Heart left ventricle (tissue), 16 donors: ENCODE measurements at regions of chr7 and their contacts with region 1.

Region 1: DNA sequence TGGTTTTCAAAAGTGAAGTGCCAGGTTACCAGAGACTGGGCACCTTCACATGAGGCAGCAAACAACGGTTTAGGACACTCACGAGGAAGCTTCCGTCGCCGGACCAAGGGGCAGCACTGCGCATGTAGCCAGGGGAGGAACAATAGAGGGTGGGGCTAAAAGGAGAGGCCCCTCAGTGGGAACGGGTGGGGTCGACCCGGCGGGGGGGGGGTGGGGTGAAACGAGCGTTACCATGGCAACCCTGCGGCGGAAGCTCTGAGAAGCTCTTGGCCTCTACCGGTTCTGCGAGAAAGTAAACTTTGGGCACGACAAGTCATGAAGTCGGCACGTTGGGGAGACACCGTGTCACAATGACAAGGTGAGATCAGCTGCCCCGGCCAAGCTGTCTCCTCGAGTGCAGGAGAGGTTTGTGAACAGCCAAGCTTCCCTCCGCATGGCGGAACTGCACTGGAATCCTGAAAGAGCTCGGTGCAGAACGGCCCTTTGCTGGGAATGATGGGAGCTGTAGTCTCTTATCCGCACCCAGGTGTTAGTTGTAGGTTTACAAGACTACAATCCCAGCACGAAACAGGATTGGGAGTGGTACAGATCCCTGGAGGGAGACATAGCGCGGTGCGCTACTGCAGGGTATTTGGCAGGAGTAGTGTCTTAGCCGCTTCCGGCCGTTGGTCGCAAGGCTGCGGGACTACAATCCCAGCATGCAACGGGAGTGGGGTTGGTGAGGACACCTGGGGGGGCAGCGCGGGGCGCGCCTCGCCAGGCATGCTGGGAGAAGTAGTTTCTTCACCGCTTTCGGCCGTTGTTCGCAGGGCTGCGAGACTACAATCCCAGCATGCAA is 72.8 kb upstream of the ZNF722 start:
- DNase-seq: peak; percentile 85 to 97 (median 94)
- ATAC-seq: peak; percentile 98 to 99 (median 99)
- H3K4me3 ChIP-seq: peak overlapping the region; percentile 41 to 86 (median 70)
- H3K27ac ChIP-seq: peak overlapping the region in 11 of 12 donors; percentile 78 to 97 (median 88)
- H3K4me1 ChIP-seq: peaks cover 0 to 14% (median 4%) of the 10 kb centered on the region in 12 donors
- H3K27me3 ChIP-seq: peaks cover 0 to under 1% (median 0%) of the 10 kb centered on the region in 9 donors
- CTCF ChIP-seq: no peak
- POLR2A ChIP-seq: no peak

Region 2: DNA sequence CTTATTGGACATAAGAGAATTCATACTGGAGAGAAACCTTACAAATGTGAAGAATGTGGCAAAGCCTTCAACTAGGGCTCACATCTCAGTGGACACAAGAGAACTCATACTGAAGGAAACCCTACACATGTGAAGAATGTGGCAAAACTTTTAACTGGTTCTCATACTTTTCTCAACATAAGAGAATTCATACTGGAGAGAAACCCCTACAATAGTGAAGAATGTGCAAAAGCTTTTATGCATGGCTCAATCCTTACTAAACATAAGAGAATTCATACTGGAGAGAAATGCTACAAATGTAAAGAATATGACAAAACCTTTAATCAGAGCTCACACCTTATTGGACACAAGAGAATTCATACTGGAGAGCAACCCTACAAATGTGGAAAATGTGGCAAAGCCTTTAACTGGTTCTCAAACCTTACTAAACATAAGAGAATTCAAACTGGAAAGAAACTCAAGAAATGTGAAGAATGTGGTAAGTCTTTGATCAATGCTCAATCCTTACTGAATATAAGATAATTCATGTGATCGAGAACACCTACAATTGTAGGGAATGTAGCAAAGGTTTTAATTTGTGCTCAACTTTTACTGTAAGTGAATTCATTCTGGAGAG is 49.0 kb before region 1 on chr7:
- intact Hi-C with region 1: no loop called
- DNase-seq: no peak
- ATAC-seq: no peak
- H3K4me3 ChIP-seq: no peak overlapping the region
- H3K27ac ChIP-seq: no peak overlapping the region
- H3K4me1 ChIP-seq: no peaks in the 10 kb centered on the region
- H3K27me3 ChIP-seq: no peaks in the 10 kb centered on the region
- CTCF ChIP-seq: no peak
- POLR2A ChIP-seq: no peak

Region 3: DNA sequence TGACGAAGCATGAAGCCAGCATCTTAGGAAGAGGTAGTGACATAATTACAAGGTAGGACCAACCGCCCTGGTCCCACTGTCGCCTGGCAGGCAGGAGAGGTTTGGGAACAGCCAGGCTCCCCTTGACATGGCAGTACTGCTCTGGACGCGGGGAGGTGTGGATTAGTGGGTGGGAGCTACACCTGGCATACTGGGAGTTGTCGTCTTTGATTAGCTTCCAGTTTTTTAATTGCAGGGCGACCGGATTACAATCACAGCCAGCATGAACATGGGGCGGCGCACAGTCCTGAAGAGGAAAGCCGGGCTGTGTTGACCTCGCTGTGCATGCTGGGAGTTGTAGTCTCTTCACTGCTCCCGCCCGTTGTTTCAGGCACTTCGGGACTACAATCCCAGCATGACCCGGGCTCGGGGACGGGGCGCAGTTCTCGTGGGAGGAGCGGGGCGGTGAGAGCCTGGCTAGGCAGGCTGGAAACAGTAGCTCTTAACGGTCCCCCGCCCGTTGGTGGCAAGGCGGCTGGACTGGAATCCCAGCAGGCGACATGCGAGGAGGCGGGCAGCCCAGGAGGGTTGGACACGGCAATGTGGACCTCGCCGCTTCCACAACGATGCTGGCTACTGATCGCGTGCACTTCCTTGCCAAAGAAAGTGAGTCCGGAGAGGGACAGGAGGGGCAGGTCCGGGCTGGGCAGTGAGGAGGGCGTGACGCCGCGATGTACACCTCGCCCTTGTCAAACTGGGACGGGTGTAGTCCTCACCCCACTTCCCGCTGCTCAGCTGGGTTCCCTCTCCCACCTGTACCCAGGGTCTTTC is 25.2 kb before region 1 on chr7:
- intact Hi-C with region 1: loop called in 6 of 10 experiments (anchors 1 to 2 kb)
- DNase-seq: peak; percentile 85 to 97 (median 97)
- ATAC-seq: peak; percentile 99 to 100 (median 100)
- H3K4me3 ChIP-seq: peak overlapping the region; percentile 38 to 89 (median 70)
- H3K27ac ChIP-seq: peak overlapping the region in 8 of 12 donors; percentile 30 to 72 (median 50)
- H3K4me1 ChIP-seq: peaks cover 0 to 13% (median 0%) of the 10 kb centered on the region in 12 donors
- H3K27me3 ChIP-seq: no peaks in the 10 kb centered on the region
- CTCF ChIP-seq: no peak
- POLR2A ChIP-seq: no peak

Region 4: DNA sequence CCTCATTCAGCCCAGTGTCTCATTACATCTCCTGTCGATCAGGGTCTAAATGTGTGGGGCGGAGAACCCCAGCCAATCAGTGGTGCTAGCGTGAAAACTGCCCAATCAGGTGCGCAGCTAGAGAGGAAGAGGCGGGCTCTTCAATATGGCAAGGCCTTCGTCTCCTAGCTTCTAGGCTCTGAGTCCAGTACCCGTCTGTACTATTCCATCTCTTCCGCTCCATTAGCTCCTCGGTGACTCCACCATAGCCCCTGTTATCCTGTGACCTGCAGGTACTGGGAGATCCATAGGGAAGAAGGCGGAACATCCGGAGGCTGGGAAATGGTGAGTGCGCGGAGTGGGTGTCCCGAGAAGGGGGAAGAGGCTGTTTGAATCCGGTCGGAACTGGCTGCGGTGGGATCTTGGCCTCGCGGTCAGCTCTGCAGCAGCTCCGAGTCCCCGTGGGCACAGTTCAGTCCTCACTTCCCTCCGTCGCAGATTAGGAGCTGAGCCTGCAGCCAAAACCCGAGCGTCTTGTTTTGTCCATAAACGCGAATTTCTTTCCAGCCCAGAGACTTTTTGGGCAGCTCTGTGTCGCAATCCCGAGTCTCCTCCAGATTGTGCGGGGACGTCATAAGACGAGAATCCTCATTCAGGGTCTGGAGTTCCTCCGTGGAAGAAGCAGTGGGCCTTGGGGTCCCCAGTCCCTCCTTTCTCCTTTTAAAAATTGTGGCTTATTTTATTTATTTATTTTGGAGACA is 119.6 kb after region 1 on chr7 and contains the start of gene ZNF727:
- intact Hi-C with region 1: loop called in 2 of 10 experiments (anchors 10 kb)
- DNase-seq: peak; percentile 68 to 85 (median 79)
- ATAC-seq: peak; percentile 99 to 100 (median 99)
- H3K4me3 ChIP-seq: peak within 1 kb of the TSS; percentile 43 to 87 (median 64)
- H3K27ac ChIP-seq: peak within 1 kb of the TSS; percentile 51 to 92 (median 80)
- H3K4me1 ChIP-seq: peaks cover 0 to 16% (median 2%) of the 10 kb centered on the region in 12 donors
- H3K27me3 ChIP-seq: no peaks in the 10 kb centered on the region
- CTCF ChIP-seq: no peak
- POLR2A ChIP-seq: no peak
- total RNA-seq, gene ZNF727: 0.77 to 6.2 (median 2.9) TPM in 8 of 9 donors, not detected in the other

Region 5: DNA sequence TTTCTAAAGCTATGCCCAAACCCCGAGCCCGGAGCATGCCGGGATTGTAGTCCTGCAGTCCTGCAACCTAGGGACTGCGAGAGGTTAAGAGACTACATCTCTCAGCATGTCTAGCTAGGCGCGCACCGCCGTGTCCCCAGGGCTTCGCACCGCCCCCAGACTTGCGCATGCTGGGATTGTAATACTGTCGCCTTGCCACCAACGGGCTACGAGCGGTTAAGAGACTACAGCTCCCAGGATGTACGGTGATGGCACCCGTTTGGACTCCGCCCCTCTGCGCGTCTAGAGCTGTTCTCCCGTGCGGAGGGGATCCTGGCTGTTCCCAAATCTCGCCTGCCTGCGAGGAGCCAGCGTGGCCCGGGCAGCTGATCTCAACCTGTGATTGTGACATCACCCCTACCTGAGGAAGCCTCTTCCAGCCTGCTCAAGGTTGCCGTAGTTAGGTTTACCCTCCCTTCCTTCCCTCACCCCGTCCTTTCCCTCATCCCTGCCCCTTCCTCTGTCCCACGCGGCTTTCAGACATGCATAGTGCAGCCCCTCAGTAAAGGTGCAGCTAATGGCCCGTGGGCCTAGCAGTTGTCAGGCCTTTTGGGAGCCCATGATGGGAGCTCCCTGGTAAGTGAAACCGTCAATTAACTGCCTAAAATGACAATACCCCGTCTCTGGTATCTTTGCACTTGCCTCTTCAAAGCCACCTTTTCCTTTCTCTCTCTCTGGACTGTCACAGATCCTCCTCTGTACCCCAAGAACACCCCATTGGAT is 381.6 kb after region 1 on chr7:
- intact Hi-C with region 1: loop called in 2 of 10 experiments (anchors 5 to 10 kb)
- DNase-seq: peak; percentile 91 to 96 (median 95)
- ATAC-seq: peak; percentile 99 to 100 (median 99)
- H3K4me3 ChIP-seq: peak overlapping the region; percentile 46 to 82 (median 68)
- H3K27ac ChIP-seq: peak overlapping the region; percentile 48 to 92 (median 80)
- H3K4me1 ChIP-seq: peaks cover 0 to 18% (median 7%) of the 10 kb centered on the region in 12 donors
- H3K27me3 ChIP-seq: no peaks in the 10 kb centered on the region
- CTCF ChIP-seq: peak in 2 of 12 donors; percentile 17 to 20
- POLR2A ChIP-seq: peak in 1 of 2 donors; percentile 44

Region 6: GRCh38 chr7:64313740-64314491 is 388.1 kb after region 1 on chr7 and contains the start of gene ZNF736:
- intact Hi-C with region 1: loop called in 2 of 10 experiments (anchors 5 to 10 kb)
- DNase-seq: peak; percentile 89 to 93 (median 92)
- ATAC-seq: peak; percentile 99 to 100 (median 100)
- H3K4me3 ChIP-seq: peak within 1 kb of the TSS; percentile 51 to 89 (median 73)
- H3K27ac ChIP-seq: peak within 1 kb of the TSS in 11 of 12 donors; percentile 24 to 79 (median 58)
- H3K4me1 ChIP-seq: peaks cover 0 to 25% (median 16%) of the 10 kb centered on the region in 12 donors
- H3K27me3 ChIP-seq: no peaks in the 10 kb centered on the region
- CTCF ChIP-seq: no peak
- POLR2A ChIP-seq: peak in 1 of 2 donors; percentile 61
- total RNA-seq, gene ZNF736: 2.5 to 9.0 (median 3.9) TPM

Region 7: GRCh38 chr7:64863021-64863420 is 937.2 kb after region 1 on chr7:
- intact Hi-C with region 1: no loop called
- DNase-seq: no peak
- ATAC-seq: no peak
- H3K4me3 ChIP-seq: no peak overlapping the region
- H3K27ac ChIP-seq: no peak overlapping the region
- H3K4me1 ChIP-seq: no peaks in the 10 kb centered on the region
- H3K27me3 ChIP-seq: peaks cover 0 to 4% (median 0%) of the 10 kb centered on the region in 9 donors
- CTCF ChIP-seq: no peak
- POLR2A ChIP-seq: no peak